K562 (cell line): ENCODE measurements at regions of chr5 and their contacts with region 1.

Region 1: GRCh38 chr5:54217826-54218503 is 92.4 kb downstream of the ARL15 start:
- DNase-seq: peak; percentile 14 to 52 (median 25)
- ATAC-seq: peak; percentile 84
- H3K4me3 ChIP-seq: no peak overlapping the region
- H3K27ac ChIP-seq: no peak overlapping the region
- H3K4me1 ChIP-seq: no peaks in the 10 kb centered on the region; a peak in 1 of 5 replicates
- H3K27me3 ChIP-seq: no peaks in the 10 kb centered on the region
- CTCF ChIP-seq: peak; percentile 23 to 67 (median 47); a peak in 4 of 6 replicates
- EP300 ChIP-seq: no peak
- POLR2A ChIP-seq: no peak
- RAD21 ChIP-seq: peak; percentile 42 to 53; a peak in 3 of 4 replicates

Region 2: DNA sequence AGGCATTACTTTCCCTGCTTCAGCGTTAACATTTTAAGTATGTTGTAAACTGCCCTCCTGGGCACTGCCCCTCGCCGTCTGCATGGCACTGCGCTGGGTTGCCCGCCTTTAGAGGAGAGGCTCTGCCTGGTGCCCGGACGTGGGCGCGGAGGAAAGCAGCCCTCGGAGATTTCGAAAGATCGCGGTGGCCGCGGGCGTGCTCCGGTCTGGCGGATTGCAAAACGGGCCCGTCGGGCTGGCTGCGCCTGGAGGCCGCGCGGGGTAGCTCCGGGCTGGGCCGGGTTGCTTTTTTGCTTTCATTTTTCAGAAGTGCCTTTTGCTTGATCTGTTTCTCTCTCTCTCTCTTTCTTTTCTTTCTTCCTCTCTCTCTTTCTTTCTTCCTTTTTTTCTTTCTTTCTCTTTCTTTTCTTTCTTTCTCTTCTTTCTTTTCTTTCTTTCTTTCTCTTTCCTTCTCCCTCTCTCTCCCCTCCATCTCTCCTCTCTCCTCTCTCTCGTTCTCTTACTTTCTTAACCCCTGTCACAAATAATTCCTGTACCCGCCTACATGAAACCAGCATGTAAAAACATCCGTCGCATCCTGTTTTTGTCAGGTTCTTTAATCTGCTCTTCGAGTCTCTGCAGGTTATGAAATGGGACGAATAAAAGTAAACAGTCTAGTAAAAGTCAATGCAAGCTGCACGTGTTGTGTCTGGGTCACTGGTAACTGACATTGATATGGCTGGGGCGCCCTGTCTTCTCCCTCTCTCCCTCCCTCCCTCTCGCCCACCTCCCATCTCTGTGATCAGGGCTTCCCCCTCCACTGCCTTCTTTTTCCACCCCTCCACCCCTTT is 735.9 kb before region 1 on chr5:
- CTCF ChIA-PET with region 1: interaction called, 4 read pairs
- POLR2A ChIA-PET with region 1: no interaction called
- in situ Hi-C with region 1: no loop called
- intact Hi-C with region 1: loop called (anchors 5 kb)
- DNase-seq: peak; percentile 28 to 56 (median 34)
- ATAC-seq: peak; percentile 86
- H3K4me3 ChIP-seq: 0 out of 2 replicates have a peak overlapping the region, but pooled peaks have one; percentile 8
- H3K27ac ChIP-seq: no peak overlapping the region
- H3K4me1 ChIP-seq: peaks cover 0 to 30% of the 10 kb centered on the region in 2 experiments; a peak in 2 of 5 replicates
- H3K27me3 ChIP-seq: peaks cover 33 to 38% of the 10 kb centered on the region in 2 experiments
- CTCF ChIP-seq: no peak
- EP300 ChIP-seq: no peak
- POLR2A ChIP-seq: no peak
- RAD21 ChIP-seq: no peak; a peak in 2 of 4 replicates

Region 3: DNA sequence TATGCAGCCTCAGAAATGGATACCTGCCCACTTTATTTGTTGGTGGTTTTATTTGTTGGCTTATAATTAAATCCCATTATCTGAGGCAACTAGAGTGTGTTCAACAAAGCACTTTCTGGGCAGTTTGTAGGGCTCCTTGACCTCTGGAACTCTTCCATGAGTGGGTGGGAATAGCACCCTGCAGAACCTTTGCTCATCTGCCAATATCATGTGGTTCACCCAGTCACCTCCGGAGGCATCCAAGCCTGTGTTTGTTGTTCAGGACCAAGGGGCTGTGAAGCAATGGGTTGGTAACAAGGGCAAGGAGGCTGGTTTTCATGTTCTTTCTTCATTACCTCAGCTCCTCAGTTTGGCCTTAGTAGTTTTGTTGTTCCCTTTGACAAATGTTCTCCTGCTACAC is 343.6 kb before region 1 on chr5:
- CTCF ChIA-PET with region 1: no interaction called
- POLR2A ChIA-PET with region 1: no interaction called
- in situ Hi-C with region 1: no loop called
- intact Hi-C with region 1: loop called (anchors 10 kb)
- DNase-seq: peak in 2 of 4 experiments; percentile 20 to 22
- ATAC-seq: peak; percentile 82
- H3K4me3 ChIP-seq: no peak overlapping the region
- H3K27ac ChIP-seq: no peak overlapping the region
- H3K4me1 ChIP-seq: no peaks in the 10 kb centered on the region
- H3K27me3 ChIP-seq: no peaks in the 10 kb centered on the region
- CTCF ChIP-seq: peak in 2 of 3 experiments; percentile 9 to 14; a peak in 2 of 6 replicates
- EP300 ChIP-seq: no peak
- POLR2A ChIP-seq: peak; percentile 35; the same call in 1 of the 2 replicates
- RAD21 ChIP-seq: peak in 1 of 2 experiments; percentile 40; a peak in 2 of 4 replicates

Region 4: GRCh38 chr5:53965459-53965858 is 252.5 kb before region 1 on chr5:
- CTCF ChIA-PET with region 1: no interaction called
- POLR2A ChIA-PET with region 1: no interaction called
- in situ Hi-C with region 1: no loop called
- intact Hi-C with region 1: loop called (anchors 10 kb)
- DNase-seq: no peak
- ATAC-seq: no peak
- H3K4me3 ChIP-seq: no peak overlapping the region
- H3K27ac ChIP-seq: no peak overlapping the region
- H3K4me1 ChIP-seq: no peaks in the 10 kb centered on the region
- H3K27me3 ChIP-seq: no peaks in the 10 kb centered on the region
- CTCF ChIP-seq: no peak
- EP300 ChIP-seq: no peak
- POLR2A ChIP-seq: no peak
- RAD21 ChIP-seq: no peak

Region 5: GRCh38 chr5:54090495-54091084 is 127.4 kb before region 1 on chr5:
- CTCF ChIA-PET with region 1: no interaction called
- POLR2A ChIA-PET with region 1: no interaction called
- in situ Hi-C with region 1: no loop called
- intact Hi-C with region 1: loop called (anchors 10 kb)
- DNase-seq: peak; percentile 60 to 76 (median 64)
- ATAC-seq: peak; percentile 96
- H3K4me3 ChIP-seq: no peak overlapping the region
- H3K27ac ChIP-seq: no peak overlapping the region
- H3K4me1 ChIP-seq: peaks cover 0 to 6% of the 10 kb centered on the region in 2 experiments; a peak in 2 of 5 replicates
- H3K27me3 ChIP-seq: no peaks in the 10 kb centered on the region
- CTCF ChIP-seq: peak in 2 of 3 experiments; percentile 45 to 52; a peak in 3 of 6 replicates
- EP300 ChIP-seq: peak; percentile 38; the same call in 1 of the 2 replicates
- POLR2A ChIP-seq: no peak
- RAD21 ChIP-seq: peak; percentile 32 to 42; a peak in 2 of 4 replicates